Sciatic nerve (tissue), 2 donors: ENCODE measurements at regions of chrX and their contacts with region 1.

Region 1: GRCh38 chrX:46029777-46030176 is 515.4 kb downstream of the ZNF674 start:
- DNase-seq: no peak
- ATAC-seq: no peak

Region 2: DNA sequence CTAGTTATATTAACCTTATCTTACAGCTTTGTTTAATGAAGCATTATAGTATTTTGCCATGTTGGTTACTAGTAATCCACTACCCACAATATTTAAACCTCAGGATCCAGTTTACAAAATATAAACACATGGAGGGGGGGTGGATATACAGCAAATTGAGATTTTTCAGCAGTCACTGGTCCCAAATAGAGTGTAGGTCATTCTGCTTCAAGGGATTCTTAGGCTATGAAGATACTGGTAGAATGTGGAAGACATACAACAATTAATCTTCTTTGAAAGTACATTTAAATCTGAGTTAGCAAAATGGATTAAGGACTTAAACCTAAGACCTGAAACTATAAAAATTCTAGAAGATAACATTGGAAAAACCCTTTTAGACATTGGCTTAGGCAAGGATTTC is 54.1 kb before region 1 on chrX:
- intact Hi-C with region 1: loop called (anchors 2 kb)
- DNase-seq: no peak
- ATAC-seq: no peak